ENCODE measurements at regions of chr1 and their contacts with region 1.

Region 1: DNA sequence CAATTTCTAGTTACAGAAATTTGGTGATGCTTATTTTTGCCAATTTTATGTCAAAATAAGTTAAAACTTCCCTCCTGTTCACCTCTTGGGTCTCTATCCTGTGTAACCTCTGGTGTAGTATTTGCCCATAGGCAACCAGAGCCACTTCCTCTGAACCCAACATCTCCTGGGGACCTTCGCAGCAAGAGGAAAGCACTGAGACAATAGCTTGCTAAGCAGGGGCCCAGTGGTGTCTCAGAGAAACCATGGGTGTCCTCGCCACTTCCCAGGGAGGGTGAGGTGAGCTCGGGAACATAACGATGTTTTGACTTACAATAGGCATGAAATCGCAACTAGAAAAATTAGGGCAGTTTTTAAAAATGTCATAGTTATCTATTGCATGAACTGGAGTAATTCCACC is 56.4 kb upstream of the SCCPDH start:
- DNase-seq: no peak
- H3K4me3 Mint-ChIP-seq: no peak overlapping the region
- H3K27ac Mint-ChIP-seq: no peak overlapping the region
- H3K4me1 Mint-ChIP-seq: no peaks in the 10 kb centered on the region
- H3K27me3 Mint-ChIP-seq: no peaks in the 10 kb centered on the region
- CTCF ChIP-seq: no peak

Region 2: DNA sequence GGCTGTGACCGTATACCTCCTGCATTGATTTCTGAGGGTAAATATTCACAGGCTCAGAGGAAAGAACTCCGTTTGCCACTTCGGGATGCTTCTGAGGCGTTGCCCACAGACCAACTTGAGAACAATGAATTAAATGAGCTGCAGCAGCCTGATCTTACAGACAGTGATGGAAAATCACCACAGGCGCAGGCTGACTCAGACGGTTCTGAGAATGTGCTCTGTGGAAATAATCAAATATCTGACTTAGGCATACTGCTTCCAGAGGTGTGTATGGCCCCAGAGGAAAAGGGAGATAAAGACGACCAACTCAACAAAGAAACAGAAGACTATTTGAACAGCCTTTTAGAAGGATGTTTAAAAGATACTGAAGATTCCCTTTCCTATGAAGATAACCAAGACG is 20.3 kb before region 1 on chr1:
- CTCF ChIA-PET with region 1: interaction called, 17 read pairs
- POLR2A ChIA-PET with region 1: interaction called, 4 read pairs
- intact Hi-C with region 1: no loop called
- DNase-seq: no peak
- H3K4me3 Mint-ChIP-seq: no peak overlapping the region
- H3K27ac Mint-ChIP-seq: no peak overlapping the region
- H3K4me1 Mint-ChIP-seq: no peaks in the 10 kb centered on the region
- H3K27me3 Mint-ChIP-seq: no peaks in the 10 kb centered on the region
- CTCF ChIP-seq: no peak

Region 3: GRCh38 chr1:246794835-246795671 is 127.3 kb after region 1 on chr1:
- CTCF ChIA-PET with region 1: no interaction called
- POLR2A ChIA-PET with region 1: no interaction called
- intact Hi-C with region 1: no loop called
- DNase-seq: peak; percentile 50
- H3K4me3 Mint-ChIP-seq: no peak overlapping the region
- H3K27ac Mint-ChIP-seq: no peak overlapping the region
- H3K4me1 Mint-ChIP-seq: peaks cover 14% of the 10 kb centered on the region
- H3K27me3 Mint-ChIP-seq: no peaks in the 10 kb centered on the region
- CTCF ChIP-seq: no peak

Region 4: DNA sequence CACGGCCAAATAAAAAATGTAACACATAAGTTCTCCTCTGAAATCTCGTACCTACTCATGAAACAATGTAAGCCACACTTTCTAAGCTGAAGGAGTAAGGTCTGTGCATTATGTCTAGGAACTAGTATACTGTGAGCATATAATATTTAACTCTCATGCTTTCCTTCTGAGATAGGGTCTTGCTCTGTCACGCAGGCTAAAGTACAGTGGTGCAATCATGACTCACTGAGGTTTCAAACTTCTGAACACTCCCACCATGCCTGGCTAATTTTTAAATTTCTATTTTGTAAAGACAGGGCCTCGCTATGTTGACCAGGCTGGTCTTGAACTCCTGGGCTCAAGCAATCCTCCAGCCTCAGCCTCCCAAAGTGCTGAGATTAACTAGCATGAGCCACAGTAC is 192.6 kb after region 1 on chr1:
- CTCF ChIA-PET with region 1: no interaction called
- POLR2A ChIA-PET with region 1: no interaction called
- intact Hi-C with region 1: no loop called
- DNase-seq: peak; percentile 29
- H3K4me3 Mint-ChIP-seq: no peak overlapping the region
- H3K27ac Mint-ChIP-seq: peak overlapping the region; percentile 64
- H3K4me1 Mint-ChIP-seq: no peaks in the 10 kb centered on the region
- H3K27me3 Mint-ChIP-seq: no peaks in the 10 kb centered on the region
- CTCF ChIP-seq: no peak

Measured in MCF 10A (cell line).